CD14-positive monocyte (primary cell): ENCODE measurements at regions of chr12 and their contacts with region 1.

Region 1: GRCh38 chr12:52023182-52023975 is 16.6 kb downstream of the TAMALIN start:
- DNase-seq: peak; percentile 71 to 82 (median 77)
- H3K4me3 ChIP-seq: peak overlapping the region; percentile 21 to 71 (median 37)
- H3K4me3 Mint-ChIP-seq: peak overlapping the region; percentile 75 to 92
- H3K27ac ChIP-seq: peak overlapping the region; percentile 77 to 92
- H3K27ac Mint-ChIP-seq: peak overlapping the region; percentile 54 to 99 (median 94)
- H3K4me1 ChIP-seq: peaks cover 39 to 55% of the 10 kb centered on the region in 2 donors
- H3K4me1 Mint-ChIP-seq: peaks cover 53% of the 10 kb centered on the region
- H3K27me3 ChIP-seq: peaks cover 0 to 8% of the 10 kb centered on the region in 2 donors
- H3K27me3 Mint-ChIP-seq: peaks cover 7 to 31% (median 25%) of the 10 kb centered on the region in 3 donors
- CTCF ChIP-seq: peak; percentile 95

Region 2: DNA sequence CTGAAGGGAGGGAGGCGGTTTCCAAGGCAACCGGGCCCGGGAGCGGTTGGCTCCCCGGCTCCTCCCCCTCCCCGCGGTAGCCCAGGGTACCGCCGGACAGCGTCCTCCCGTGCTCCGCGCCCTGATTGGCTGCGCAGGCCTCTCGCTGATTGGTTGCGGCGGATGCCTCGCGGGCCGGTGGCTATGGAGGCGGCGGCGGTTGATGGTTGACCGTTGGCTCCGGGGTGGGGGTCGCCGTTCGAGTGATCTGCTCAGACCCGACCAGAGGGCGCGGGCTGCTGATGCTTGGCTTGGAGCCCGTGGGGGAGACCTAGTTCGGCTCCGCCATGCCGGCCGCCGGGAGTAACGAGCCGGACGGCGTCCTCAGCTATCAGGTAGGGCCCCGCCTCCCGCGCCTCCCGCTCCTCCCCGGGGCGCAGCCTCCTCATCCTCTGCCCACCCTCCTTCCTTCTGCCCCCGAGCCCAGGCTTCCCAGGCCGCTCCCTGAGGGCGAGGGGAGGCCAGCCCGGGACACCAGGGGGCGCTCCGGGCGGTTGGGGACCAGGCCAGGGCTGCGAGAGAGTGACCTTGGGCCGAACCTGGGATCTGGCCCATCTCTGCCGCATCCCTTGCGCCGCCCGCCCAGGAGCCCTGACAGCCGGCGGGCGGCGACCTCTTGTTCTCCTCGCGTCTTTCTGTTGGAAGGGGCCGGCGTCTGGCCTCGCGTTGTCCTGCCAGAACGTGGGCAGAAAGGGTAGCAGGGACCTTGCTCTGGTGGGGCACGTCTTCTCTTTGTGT is 598.5 kb before region 1 on chr12 and contains the start of gene SLC4A8:
- intact Hi-C with region 1: loop called in 1 of 2 experiments (anchors 5 kb)
- DNase-seq: peak; percentile 63 to 71 (median 64)
- H3K4me3 ChIP-seq: peak within 1 kb of the TSS; percentile 18 to 70 (median 37)
- H3K4me3 Mint-ChIP-seq: peak within 1 kb of the TSS; percentile 70 to 83
- H3K27ac ChIP-seq: no peak within 1 kb of the TSS
- H3K27ac Mint-ChIP-seq: no peak within 1 kb of the TSS
- H3K4me1 ChIP-seq: peaks cover 10 to 11% of the 10 kb centered on the region in 2 donors
- H3K4me1 Mint-ChIP-seq: peaks cover 11% of the 10 kb centered on the region
- H3K27me3 ChIP-seq: peaks cover 10 to 26% of the 10 kb centered on the region in 2 donors
- H3K27me3 Mint-ChIP-seq: peaks cover 22 to 35% (median 25%) of the 10 kb centered on the region in 3 donors
- CTCF ChIP-seq: peak; percentile 92
- polyA plus RNA-seq, gene SLC4A8: 1.9 to 5.4 (median 2.3) TPM

Region 3: DNA sequence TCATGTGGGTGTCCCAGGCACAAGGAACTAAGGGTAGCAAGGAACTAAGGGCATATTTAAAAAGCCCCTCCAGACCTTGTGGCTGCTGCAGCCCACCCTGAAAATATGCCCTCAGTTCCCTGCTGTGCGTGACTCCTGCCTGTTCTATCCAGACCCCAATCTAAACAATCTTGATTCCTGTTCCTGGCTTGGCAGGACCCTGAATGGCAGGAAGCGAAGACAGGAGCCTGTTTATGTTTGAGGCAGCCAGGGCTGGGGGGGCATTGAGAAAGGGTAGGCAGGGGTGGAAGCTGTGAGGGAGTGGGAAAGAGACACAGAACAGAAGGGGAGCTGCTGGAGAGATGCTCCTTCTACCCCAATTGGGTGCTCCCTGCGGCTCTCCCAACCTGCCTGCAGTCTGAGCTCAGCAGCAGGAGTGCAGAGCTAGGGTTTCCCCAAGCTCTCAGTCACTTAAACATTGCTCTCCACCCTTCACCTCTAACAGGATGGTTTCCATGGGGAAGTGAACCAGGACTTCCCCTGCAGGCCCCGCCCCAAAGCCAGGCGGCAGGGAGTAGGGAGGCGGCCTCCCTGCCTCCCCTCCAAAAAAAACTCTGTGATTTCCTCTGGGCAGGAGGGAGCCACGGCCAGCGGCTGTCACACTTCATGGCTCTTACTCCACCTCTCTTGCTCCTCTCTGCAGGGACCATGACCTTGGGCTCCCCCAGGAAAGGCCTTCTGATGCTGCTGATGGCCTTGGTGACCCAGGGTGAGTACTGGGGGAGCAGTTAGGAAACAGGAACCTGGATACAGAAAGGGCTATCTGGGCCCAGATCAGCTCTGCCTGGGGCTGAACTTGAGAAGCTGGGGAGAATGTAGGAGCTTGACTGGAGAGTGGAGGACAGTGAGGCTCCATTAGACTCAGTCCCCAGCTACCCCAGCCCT is 111.3 kb before region 1 on chr12:
- intact Hi-C with region 1: no loop called
- DNase-seq: peak; percentile 46 to 80 (median 49)
- H3K4me3 ChIP-seq: peak overlapping the region in 1 of 3 experiments; percentile 61
- H3K4me3 Mint-ChIP-seq: peak overlapping the region; percentile 42 to 90
- H3K27ac ChIP-seq: peak overlapping the region in 1 of 2 donors; percentile 47
- H3K27ac Mint-ChIP-seq: peak overlapping the region; percentile 55 to 85 (median 77)
- H3K4me1 ChIP-seq: peaks cover 38 to 48% of the 10 kb centered on the region in 2 donors
- H3K4me1 Mint-ChIP-seq: peaks cover 41% of the 10 kb centered on the region
- H3K27me3 ChIP-seq: peaks cover 9 to 14% of the 10 kb centered on the region in 2 donors
- H3K27me3 Mint-ChIP-seq: peaks cover 11 to 21% (median 19%) of the 10 kb centered on the region in 3 donors
- CTCF ChIP-seq: no peak

Region 4: GRCh38 chr12:52050761-52051541 is 27.6 kb after region 1 on chr12 and contains the start of gene NR4A1:
- intact Hi-C with region 1: loop called in 1 of 2 experiments (anchors 2 kb)
- DNase-seq: peak; percentile 92 to 99 (median 97)
- H3K4me3 ChIP-seq: peak within 1 kb of the TSS; percentile 60 to 87 (median 63)
- H3K4me3 Mint-ChIP-seq: peak within 1 kb of the TSS; percentile 94 to 99
- H3K27ac ChIP-seq: peak within 1 kb of the TSS; percentile 85 to 94
- H3K27ac Mint-ChIP-seq: peak within 1 kb of the TSS; percentile 94 to 97 (median 96)
- H3K4me1 ChIP-seq: peaks cover 36 to 72% of the 10 kb centered on the region in 2 donors
- H3K4me1 Mint-ChIP-seq: peaks cover 43% of the 10 kb centered on the region
- H3K27me3 ChIP-seq: peaks cover 0 to 24% of the 10 kb centered on the region in 2 donors
- H3K27me3 Mint-ChIP-seq: peaks cover 28 to 43% (median 39%) of the 10 kb centered on the region in 3 donors
- CTCF ChIP-seq: no peak
- polyA plus RNA-seq, gene NR4A1: 10.1 to 1,297 (median 41.4) TPM

Region 5: DNA sequence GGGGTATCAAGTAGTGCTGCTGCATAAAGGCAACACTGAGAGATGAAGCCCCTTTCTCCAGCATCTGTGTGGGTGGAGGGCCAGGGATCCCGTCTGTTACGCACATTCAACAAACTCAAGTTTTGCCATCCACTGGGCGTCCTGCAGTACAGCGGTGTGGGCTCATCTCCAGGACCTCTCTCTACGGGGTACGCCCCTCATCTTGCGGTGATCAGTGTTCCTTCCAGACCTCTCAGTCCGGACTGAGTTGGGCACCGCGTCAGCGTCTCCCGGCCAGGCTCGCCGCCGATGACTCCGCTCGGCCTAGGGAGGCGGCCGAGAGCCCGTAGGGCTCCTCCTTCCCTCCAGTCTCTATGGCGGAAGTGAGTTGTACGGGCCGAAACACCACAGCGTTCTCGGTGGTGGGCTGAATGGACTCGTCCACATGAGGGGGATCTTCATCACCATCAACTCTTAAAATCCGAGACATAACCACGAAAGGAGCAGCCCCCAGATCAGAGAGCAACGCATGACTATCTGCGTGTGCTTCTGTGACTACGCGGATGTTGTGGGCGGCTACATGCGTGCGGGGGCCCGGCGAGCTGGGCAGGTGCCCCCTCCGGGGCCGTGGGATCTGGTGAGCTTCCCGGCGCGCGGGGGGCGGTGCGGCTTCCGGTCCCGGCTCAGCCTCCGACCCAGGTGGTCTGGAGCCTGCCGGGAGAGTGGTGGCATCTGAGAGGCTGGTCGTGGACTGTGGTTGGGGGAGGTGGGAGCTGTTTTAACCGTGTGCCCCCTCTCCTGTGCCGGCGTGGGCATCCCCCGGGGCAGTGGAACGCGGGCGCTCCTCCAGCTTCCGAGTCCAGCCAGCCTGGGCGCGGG is 46.2 kb after region 1 on chr12 and contains the start of gene ATG101:
- intact Hi-C with region 1: loop called (anchors 2 to 5 kb)
- DNase-seq: peak; percentile 93 to 94 (median 93)
- H3K4me3 ChIP-seq: peak within 1 kb of the TSS; percentile 63 to 93 (median 89)
- H3K4me3 Mint-ChIP-seq: peak within 1 kb of the TSS; percentile 95 to 96
- H3K27ac ChIP-seq: peak within 1 kb of the TSS; percentile 52 to 92
- H3K27ac Mint-ChIP-seq: peak within 1 kb of the TSS; percentile 92 to 100 (median 99)
- H3K4me1 ChIP-seq: peaks cover 20 to 21% of the 10 kb centered on the region in 2 donors
- H3K4me1 Mint-ChIP-seq: peaks cover 50% of the 10 kb centered on the region
- H3K27me3 ChIP-seq: peaks cover 0 to 5% of the 10 kb centered on the region in 2 donors
- H3K27me3 Mint-ChIP-seq: peaks cover 2 to 20% (median 20%) of the 10 kb centered on the region in 3 donors
- CTCF ChIP-seq: peak; percentile 65
- polyA plus RNA-seq, gene ATG101: 20.5 to 120 (median 26.4) TPM

Region 6: DNA sequence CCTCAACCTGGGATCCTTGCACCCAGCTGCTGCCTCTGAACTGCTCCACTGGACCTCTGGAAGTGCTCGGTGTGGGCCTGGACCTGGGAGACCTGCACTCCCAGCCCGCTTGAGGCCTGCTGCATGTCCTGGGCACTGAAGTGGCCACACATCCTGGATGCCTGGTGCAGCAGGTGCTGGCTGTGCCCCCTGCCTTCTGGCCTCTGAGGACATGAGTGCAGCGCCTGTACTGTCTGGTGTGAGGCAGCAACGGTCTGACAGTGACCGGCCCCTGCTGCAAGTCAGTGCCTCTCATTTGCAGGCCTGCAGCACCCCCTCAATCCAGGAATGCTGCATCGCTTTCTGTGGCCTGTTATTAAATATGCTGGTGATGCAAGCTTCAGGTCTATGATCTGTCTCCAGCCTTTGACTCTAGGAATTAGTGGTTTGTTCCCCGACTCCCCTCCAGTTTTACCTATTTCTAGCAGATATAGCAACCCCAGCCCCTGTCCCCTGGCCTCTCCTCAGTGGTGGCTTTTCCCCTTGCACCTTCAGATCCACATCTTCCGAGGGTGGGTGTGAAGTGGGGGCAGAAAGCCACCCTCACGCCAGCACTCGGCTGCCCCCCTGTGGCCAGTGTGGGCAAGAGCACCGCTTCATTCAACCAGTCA is 59.7 kb after region 1 on chr12:
- intact Hi-C with region 1: loop called (anchors 1 kb)
- DNase-seq: peak; percentile 45 to 65 (median 65)
- H3K4me3 ChIP-seq: no peak overlapping the region
- H3K4me3 Mint-ChIP-seq: no peak overlapping the region
- H3K27ac ChIP-seq: no peak overlapping the region
- H3K27ac Mint-ChIP-seq: peak overlapping the region in 2 of 7 donors; percentile 36 to 44
- H3K4me1 ChIP-seq: peaks cover 15 to 18% of the 10 kb centered on the region in 2 donors
- H3K4me1 Mint-ChIP-seq: peaks cover 18% of the 10 kb centered on the region
- H3K27me3 ChIP-seq: no peaks in the 10 kb centered on the region
- H3K27me3 Mint-ChIP-seq: peaks cover 7 to 16% (median 10%) of the 10 kb centered on the region in 3 donors
- CTCF ChIP-seq: peak; percentile 99

Region 7: DNA sequence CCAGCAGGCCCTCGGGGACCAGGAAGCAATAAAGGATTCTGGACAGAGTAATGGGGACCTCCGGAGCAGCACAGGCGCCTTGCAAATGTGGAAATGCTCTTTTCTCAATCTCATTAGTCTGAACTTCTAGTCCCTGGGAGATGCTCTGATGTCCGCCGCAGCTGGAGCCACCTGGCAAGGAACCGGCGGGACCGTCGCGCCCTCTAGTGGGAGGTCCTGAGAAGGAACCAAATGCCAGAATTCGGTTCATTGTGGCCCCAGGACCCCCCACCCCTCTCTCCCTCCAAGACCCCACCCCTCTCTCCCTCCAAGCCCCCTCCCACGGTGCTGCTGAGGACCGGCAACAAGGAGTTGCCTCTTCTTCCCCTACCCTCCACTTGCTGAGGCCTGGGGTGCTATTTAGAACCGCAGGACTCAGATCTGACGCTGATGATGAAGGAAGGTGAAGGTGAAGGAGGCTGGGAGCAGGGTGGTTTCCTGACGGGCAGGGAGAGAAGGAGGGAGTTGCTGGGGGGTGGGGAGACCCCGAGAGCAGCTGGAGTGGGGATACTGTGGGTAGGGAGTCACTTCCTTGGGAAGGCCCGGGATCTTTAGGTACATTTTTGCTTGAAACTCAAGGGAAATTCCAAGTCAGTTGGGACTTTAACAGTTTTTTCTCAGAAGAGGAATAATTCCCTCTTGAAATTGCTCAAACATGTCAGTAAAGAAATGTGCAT is 98.6 kb after region 1 on chr12:
- intact Hi-C with region 1: loop called (anchors 2 to 5 kb)
- DNase-seq: peak; percentile 38 to 61 (median 57)
- H3K4me3 ChIP-seq: no peak overlapping the region
- H3K4me3 Mint-ChIP-seq: peak overlapping the region in 1 of 2 donors; percentile 63
- H3K27ac ChIP-seq: no peak overlapping the region
- H3K27ac Mint-ChIP-seq: peak overlapping the region in 4 of 7 donors; percentile 42 to 79 (median 70)
- H3K4me1 ChIP-seq: peaks cover 28 to 41% of the 10 kb centered on the region in 2 donors
- H3K4me1 Mint-ChIP-seq: peaks cover 48% of the 10 kb centered on the region
- H3K27me3 ChIP-seq: peaks cover 0 to 8% of the 10 kb centered on the region in 2 donors
- H3K27me3 Mint-ChIP-seq: peaks cover 23 to 38% (median 25%) of the 10 kb centered on the region in 3 donors
- CTCF ChIP-seq: peak; percentile 90